Heart right ventricle (tissue), 16 donors: ENCODE measurements at regions of chr15 and their contacts with region 1.

Region 1: GRCh38 chr15:86347245-86347644 is 267.6 kb downstream of the AGBL1 start:
- DNase-seq: no peak
- ATAC-seq: no peak
- H3K4me3 ChIP-seq: no peak overlapping the region
- H3K27ac ChIP-seq: no peak overlapping the region
- H3K4me1 ChIP-seq: no peaks in the 10 kb centered on the region
- H3K27me3 ChIP-seq: peaks cover 0 to 12% (median 0%) of the 10 kb centered on the region in 7 donors
- CTCF ChIP-seq: no peak

Region 2: DNA sequence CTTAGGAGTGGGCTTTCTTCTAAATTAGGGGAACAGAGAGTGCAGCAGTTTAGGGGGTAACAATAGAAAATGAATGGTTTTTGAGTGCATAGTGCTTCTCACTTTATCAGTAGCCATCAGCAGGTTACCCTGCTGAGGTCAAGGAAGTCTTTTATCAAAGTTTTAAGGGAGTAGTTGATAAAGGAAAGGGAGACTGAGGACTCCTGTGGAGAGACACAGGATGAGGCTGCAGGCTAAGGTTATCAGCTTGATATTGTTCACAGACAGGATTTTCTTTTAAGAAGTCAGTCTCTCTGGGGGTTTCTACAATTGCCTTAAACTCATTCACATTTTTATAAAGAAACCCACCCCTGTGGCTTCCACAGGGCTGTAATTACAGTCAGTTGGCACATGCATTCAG is 62.6 kb before region 1 on chr15:
- intact Hi-C with region 1: loop called in 1 of 10 experiments (anchors 10 kb)
- DNase-seq: no peak
- ATAC-seq: no peak
- H3K4me3 ChIP-seq: no peak overlapping the region
- H3K27ac ChIP-seq: no peak overlapping the region
- H3K4me1 ChIP-seq: no peaks in the 10 kb centered on the region
- H3K27me3 ChIP-seq: no peaks in the 10 kb centered on the region
- CTCF ChIP-seq: no peak